ENCODE measurements at regions of chr3 and their contacts with region 1.

Region 1: DNA sequence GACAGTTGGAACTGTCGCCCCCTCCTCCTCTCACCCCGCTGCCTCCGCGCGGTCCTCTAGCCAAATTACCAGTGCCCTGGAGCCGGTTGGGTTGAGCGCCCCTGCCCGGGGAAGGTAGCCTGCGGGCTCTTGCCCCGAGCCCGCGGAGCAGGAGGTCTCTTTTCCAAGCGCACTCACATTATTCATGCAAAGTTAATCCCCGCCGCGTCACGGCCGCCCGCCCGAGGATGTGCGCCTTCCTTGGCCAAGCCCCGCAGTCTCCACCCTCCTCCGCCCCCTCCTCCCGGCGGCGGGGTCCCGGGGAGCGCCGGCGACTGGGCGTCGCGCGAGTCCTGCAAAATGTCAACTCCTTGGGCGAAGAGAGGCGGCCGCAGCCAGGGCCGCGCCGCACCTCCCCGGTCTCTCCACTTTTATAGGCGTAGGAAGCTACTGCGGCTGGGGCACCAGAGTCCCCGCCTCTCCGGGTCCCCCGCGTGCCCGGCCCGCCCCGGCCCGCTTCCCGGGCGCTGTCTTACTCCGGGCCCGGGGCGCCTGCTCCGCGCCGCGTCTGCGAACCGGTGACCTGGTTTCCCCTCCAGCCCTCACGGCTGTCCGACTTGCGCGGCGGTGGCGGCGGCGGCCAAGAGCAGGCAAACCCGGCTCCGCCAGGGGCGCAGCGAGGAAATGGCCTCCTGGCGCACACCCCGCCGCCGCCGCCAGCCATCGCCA is at the start of gene THRB:
- DNase-seq: peak; percentile 60
- H3K4me3 Mint-ChIP-seq: peak within 1 kb of the TSS; percentile 94
- H3K27ac Mint-ChIP-seq: peak within 1 kb of the TSS; percentile 87
- H3K4me1 Mint-ChIP-seq: peaks cover 16% of the 10 kb centered on the region
- H3K27me3 Mint-ChIP-seq: no peaks in the 10 kb centered on the region
- CTCF ChIP-seq: no peak
- total RNA-seq, gene THRB: 3.8 and 4.2 TPM in 2 replicates

Region 2: GRCh38 chr3:23304424-23304823 is 1190.3 kb before region 1 on chr3:
- CTCF ChIA-PET with region 1: no interaction called
- POLR2A ChIA-PET with region 1: no interaction called
- intact Hi-C with region 1: no loop called
- DNase-seq: no peak
- H3K4me3 Mint-ChIP-seq: no peak overlapping the region
- H3K27ac Mint-ChIP-seq: no peak overlapping the region
- H3K4me1 Mint-ChIP-seq: peaks cover 8% of the 10 kb centered on the region
- H3K27me3 Mint-ChIP-seq: no peaks in the 10 kb centered on the region
- CTCF ChIP-seq: no peak

Region 3: GRCh38 chr3:24264748-24265158 is 230.0 kb before region 1 on chr3:
- CTCF ChIA-PET with region 1: interaction called, 3 read pairs
- POLR2A ChIA-PET with region 1: interaction called, 3 read pairs
- intact Hi-C with region 1: loop called (anchors 1 kb)
- DNase-seq: peak; percentile 53
- H3K4me3 Mint-ChIP-seq: no peak overlapping the region
- H3K27ac Mint-ChIP-seq: no peak overlapping the region
- H3K4me1 Mint-ChIP-seq: peaks cover 5% of the 10 kb centered on the region
- H3K27me3 Mint-ChIP-seq: no peaks in the 10 kb centered on the region
- CTCF ChIP-seq: peak; percentile 71

Region 4: GRCh38 chr3:24591661-24592522 is 97.1 kb after region 1 on chr3:
- CTCF ChIA-PET with region 1: interaction called, 5 read pairs
- POLR2A ChIA-PET with region 1: interaction called, 3 read pairs
- intact Hi-C with region 1: loop called (anchors 2 kb)
- DNase-seq: peak; percentile 93
- H3K4me3 Mint-ChIP-seq: no peak overlapping the region
- H3K27ac Mint-ChIP-seq: peak overlapping the region; percentile 88
- H3K4me1 Mint-ChIP-seq: peaks cover 30% of the 10 kb centered on the region
- H3K27me3 Mint-ChIP-seq: no peaks in the 10 kb centered on the region
- CTCF ChIP-seq: no peak

Measured in MCF 10A (cell line).